ENCODE measurements at regions of chr4 and their contacts with region 1.

Region 1: DNA sequence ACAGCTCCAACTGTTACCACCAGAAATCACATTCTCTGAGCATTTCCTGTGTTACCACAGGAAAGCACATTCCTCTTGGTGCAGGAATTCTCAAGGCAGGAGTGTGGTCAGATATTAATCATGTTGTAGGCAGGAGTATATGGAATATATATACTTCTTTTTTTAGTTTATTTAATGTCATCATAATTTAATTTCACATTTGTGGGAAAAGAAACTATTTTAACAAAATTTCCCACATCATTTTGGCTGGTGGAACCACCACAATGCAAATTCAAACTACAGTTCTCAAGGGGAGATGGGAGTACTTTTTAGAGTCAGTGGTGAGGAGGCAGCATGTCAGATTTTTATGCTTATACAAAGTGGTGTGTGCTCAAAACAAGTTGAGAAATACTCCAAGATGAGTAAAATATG is 139.0 kb downstream of the ATP10D start:
- DNase-seq: no peak
- H3K4me3 Mint-ChIP-seq: no peak overlapping the region
- H3K27ac Mint-ChIP-seq: no peak overlapping the region
- H3K4me1 Mint-ChIP-seq: no peaks in the 10 kb centered on the region
- H3K27me3 Mint-ChIP-seq: peaks cover 5% of the 10 kb centered on the region

Region 2: GRCh38 chr4:47612116-47613023 is 11.7 kb before region 1 on chr4:
- intact Hi-C with region 1: no loop called
- DNase-seq: no peak
- H3K4me3 Mint-ChIP-seq: no peak overlapping the region
- H3K27ac Mint-ChIP-seq: no peak overlapping the region
- H3K4me1 Mint-ChIP-seq: no peaks in the 10 kb centered on the region
- H3K27me3 Mint-ChIP-seq: peaks cover 4% of the 10 kb centered on the region

Region 3: DNA sequence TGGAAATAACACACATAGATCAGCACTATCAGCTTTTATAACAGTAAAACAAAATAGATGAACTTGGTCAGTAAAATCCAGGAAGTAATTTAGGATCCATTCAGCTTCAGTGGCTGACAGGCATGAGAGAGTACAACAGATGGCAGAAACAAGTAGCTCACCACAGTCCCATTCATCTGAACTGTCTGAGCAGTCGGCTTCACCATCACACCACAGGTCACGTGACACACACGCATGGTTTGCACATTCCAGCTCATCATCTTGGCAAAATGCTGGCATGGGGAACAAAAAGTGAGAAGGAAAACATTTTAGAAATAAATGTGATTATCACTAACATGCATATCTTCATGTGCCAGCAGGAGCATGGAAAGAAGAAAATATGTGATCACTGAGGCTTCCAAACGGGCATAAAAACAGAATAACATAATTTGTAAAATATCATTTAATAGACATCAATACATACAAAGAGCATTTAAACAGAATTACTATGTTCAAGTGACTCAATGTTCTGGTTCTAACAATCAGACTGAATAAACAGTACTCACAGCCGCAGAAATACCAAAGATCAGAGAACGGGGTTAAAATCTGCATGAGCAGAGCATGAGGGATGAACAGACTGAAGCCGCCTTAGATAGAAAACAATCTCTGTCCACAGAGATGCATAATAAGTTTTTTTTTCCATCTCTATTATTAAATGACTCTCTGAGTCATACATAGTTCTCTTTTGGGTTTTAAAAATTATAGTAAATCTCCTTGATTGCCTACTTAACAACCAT is 19.1 kb after region 1 on chr4:
- intact Hi-C with region 1: loop called (anchors 1 kb)
- DNase-seq: no peak
- H3K4me3 Mint-ChIP-seq: no peak overlapping the region
- H3K27ac Mint-ChIP-seq: no peak overlapping the region
- H3K4me1 Mint-ChIP-seq: no peaks in the 10 kb centered on the region
- H3K27me3 Mint-ChIP-seq: peaks cover 6% of the 10 kb centered on the region

Measured in activated T-helper 1 cell treated with anti-CD3 and anti-CD28 coated beads, Interleukin-12 subunit alpha, Interleukin-12 subunit beta, Interleukin-2, Interleukin-4 antibody, amounts not matched to agents 30 ng/mL and 10 ng/mL and 1 ng/mL, durations not matched to agents 14 hours and 24 hours and 36 hours (primary cell).